ENCODE measurements at regions of chr1 and their contacts with region 1.

Region 1: DNA sequence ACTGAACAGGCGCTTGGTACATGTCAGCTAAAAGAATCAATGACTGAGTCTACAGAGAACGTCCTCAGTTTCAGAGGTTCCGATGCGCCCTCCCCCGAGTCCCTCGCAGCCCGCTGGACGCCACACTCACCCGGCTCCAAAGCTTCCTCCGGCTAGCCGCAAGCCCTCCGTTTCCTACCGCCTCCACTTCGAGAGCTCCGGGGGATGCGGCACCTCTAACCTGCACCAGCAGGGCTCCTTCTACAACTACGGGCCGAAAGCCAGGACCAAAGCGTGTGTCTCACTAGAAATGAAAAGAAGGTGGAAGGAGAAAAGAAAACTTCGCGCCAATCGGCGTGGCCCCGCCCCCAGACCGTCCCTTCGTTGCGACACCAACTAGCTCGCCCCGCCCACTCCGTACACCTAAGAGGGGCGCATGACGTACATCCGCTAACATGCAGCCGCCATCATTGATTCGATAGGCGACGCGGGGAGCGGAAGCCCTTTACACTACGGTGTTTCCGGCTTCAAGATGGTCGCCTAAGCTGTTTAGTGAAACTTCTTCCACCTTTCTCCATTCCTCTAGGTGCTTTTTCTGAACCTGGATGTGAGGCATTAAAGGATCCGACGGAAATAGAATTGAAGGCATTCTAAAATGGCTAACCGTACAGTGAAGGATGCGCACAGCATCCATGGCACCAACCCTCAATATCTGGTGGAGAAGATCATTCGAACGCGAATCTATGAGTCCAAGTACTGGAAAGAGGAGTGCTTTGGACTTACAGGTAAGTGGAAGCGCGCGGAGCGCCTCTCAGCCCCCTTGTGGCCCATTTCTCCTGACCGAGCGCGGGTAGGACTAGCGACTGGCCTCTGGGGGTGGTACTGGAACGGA is at the starts of genes ORC1 and PRPF38A:
- DNase-seq: peak; percentile 100
- ATAC-seq: peak; percentile 96
- H3K4me3 Mint-ChIP-seq: peak within 1 kb of the TSS; percentile 98
- H3K27ac Mint-ChIP-seq: peak within 1 kb of the TSS; percentile 100
- H3K4me1 Mint-ChIP-seq: peaks cover 45% of the 10 kb centered on the region
- H3K27me3 Mint-ChIP-seq: no peaks in the 10 kb centered on the region
- CTCF ChIP-seq: peak; percentile 43
- total RNA-seq, gene ORC1: 51.0 to 51.8 TPM
- total RNA-seq, gene PRPF38A: 81.3 to 85.8 TPM

Region 2: DNA sequence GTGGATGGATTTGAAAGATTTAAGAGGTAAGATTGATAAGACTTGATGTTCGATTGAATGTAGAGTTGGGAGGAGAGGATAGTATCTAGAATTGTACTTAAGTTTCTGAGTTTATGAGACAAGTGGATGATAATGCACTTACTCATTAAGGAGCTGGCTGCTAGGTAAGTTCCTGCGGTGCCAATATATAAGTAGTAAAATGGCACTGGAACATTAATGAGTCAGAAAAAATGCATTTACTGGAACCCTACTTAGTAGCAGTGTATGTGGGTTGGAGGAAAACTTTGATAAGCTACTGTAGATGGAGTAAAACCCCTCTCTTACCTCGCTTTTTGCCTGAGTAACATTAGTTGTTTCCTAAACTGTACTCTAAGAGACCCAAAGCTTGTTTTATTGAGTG is 194.3 kb before region 1 on chr1:
- CTCF ChIA-PET with region 1: no interaction called
- POLR2A ChIA-PET with region 1: no interaction called
- intact Hi-C with region 1: no loop called
- DNase-seq: no peak
- ATAC-seq: no peak
- H3K4me3 Mint-ChIP-seq: no peak overlapping the region
- H3K27ac Mint-ChIP-seq: no peak overlapping the region
- H3K4me1 Mint-ChIP-seq: peaks cover 9% of the 10 kb centered on the region
- H3K27me3 Mint-ChIP-seq: no peaks in the 10 kb centered on the region
- CTCF ChIP-seq: no peak

Region 3: GRCh38 chr1:52393174-52393573 is 11.2 kb before region 1 on chr1:
- CTCF ChIA-PET with region 1: interaction called, 3 read pairs
- POLR2A ChIA-PET with region 1: interaction called, 17 read pairs
- intact Hi-C with region 1: no loop called
- DNase-seq: no peak
- ATAC-seq: no peak
- H3K4me3 Mint-ChIP-seq: no peak overlapping the region
- H3K27ac Mint-ChIP-seq: no peak overlapping the region
- H3K4me1 Mint-ChIP-seq: no peaks in the 10 kb centered on the region
- H3K27me3 Mint-ChIP-seq: no peaks in the 10 kb centered on the region
- CTCF ChIP-seq: no peak

Region 4: DNA sequence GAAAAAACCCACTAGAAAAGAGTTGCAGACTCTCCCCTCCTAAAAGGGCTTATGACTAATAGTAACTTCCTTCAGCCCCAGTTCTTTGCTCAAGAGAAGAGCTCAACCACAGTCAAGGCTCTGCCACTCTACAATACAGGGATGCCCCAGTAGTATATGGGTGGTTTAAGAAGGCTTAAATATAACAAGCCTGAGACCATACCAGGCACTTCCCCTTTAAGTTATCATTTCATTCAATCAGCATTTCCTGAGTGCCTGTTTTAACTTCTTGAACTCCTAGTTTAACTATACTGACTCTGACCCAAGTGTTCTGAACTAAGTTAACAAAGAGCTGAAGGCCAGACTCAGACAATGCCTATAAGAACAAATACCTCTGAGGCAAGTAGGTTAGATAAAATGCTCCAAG is 19.9 kb after region 1 on chr1:
- CTCF ChIA-PET with region 1: interaction called, 3 read pairs
- POLR2A ChIA-PET with region 1: interaction called, 21 read pairs
- intact Hi-C with region 1: no loop called
- DNase-seq: peak; percentile 39
- ATAC-seq: peak; percentile 91
- H3K4me3 Mint-ChIP-seq: peak overlapping the region; percentile 54
- H3K27ac Mint-ChIP-seq: peak overlapping the region; percentile 95
- H3K4me1 Mint-ChIP-seq: peaks cover 41% of the 10 kb centered on the region
- H3K27me3 Mint-ChIP-seq: no peaks in the 10 kb centered on the region
- CTCF ChIP-seq: no peak

Region 5: GRCh38 chr1:52552505-52553361 is 148.4 kb after region 1 on chr1 and contains the start of gene TUT4:
- CTCF ChIA-PET with region 1: no interaction called
- POLR2A ChIA-PET with region 1: interaction called, 20 read pairs
- intact Hi-C with region 1: no loop called
- DNase-seq: peak; percentile 84
- ATAC-seq: peak; percentile 67
- H3K4me3 Mint-ChIP-seq: no peak within 1 kb of the TSS
- H3K27ac Mint-ChIP-seq: peak within 1 kb of the TSS; percentile 65
- H3K4me1 Mint-ChIP-seq: peaks cover 38% of the 10 kb centered on the region
- H3K27me3 Mint-ChIP-seq: no peaks in the 10 kb centered on the region
- CTCF ChIP-seq: no peak
- total RNA-seq, gene TUT4: 51.6 to 59.0 TPM

Region 6: GRCh38 chr1:52636721-52637695 is 232.7 kb after region 1 on chr1:
- CTCF ChIA-PET with region 1: no interaction called
- POLR2A ChIA-PET with region 1: interaction called, 13 read pairs
- intact Hi-C with region 1: no loop called
- DNase-seq: peak; percentile 89
- ATAC-seq: peak; percentile 59
- H3K4me3 Mint-ChIP-seq: peak overlapping the region; percentile 64
- H3K27ac Mint-ChIP-seq: peak overlapping the region; percentile 98
- H3K4me1 Mint-ChIP-seq: peaks cover 70% of the 10 kb centered on the region
- H3K27me3 Mint-ChIP-seq: no peaks in the 10 kb centered on the region
- CTCF ChIP-seq: no peak

Region 7: DNA sequence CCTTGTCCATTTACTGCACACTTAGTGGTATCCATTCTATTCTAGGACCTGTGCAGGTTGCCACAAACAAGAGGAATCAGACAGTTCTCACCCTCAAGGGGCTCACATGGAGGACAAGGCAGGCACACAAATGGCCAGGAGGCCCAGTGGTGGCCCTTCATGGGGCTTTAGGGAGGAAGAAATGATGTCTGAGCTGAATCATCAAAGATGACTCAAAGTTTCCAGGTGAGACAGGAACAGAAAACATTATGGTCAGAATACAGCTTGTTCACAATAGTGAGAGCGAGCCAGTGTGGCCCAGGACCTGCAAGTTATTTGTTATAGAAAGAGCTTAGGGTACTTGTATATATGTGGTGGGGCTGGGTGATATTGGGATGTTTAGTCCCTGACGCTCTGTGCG is 255.0 kb after region 1 on chr1:
- CTCF ChIA-PET with region 1: no interaction called
- POLR2A ChIA-PET with region 1: interaction called, 3 read pairs
- intact Hi-C with region 1: loop called (anchors 10 kb)
- DNase-seq: peak; percentile 71
- ATAC-seq: peak; percentile 79
- H3K4me3 Mint-ChIP-seq: peak overlapping the region; percentile 3
- H3K27ac Mint-ChIP-seq: peak overlapping the region; percentile 91
- H3K4me1 Mint-ChIP-seq: peaks cover 36% of the 10 kb centered on the region
- H3K27me3 Mint-ChIP-seq: no peaks in the 10 kb centered on the region
- CTCF ChIP-seq: no peak

Region 8: DNA sequence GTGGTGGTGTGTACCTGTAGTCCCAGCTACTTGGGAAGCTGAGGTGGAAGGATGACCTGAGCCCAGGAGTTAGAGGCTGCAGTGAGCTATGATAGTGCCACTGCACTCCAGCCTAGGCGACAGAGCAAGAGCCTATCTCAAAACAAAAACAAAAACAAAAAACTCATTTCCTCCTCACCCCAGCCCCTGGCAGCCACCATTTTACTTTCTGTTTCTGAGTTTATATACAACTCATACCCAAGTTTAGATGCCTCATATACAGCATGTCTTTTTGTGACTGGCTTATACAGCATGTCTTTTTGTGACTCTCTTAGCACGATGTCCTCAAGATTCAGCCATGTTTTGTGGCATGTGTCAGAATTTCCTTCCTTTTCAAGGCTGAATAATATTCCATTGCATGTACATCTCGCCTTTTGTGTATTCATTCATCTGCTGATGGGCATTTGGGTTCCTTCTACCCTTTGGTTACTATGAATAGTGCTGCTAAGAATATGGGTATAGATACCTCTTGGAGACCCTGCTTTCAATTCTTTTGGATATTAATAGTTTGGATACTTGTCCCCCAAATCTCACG is 279.1 kb after region 1 on chr1:
- CTCF ChIA-PET with region 1: interaction called, 15 read pairs
- POLR2A ChIA-PET with region 1: interaction called, 4 read pairs
- intact Hi-C with region 1: no loop called
- DNase-seq: no peak
- ATAC-seq: no peak
- H3K4me3 Mint-ChIP-seq: no peak overlapping the region
- H3K27ac Mint-ChIP-seq: no peak overlapping the region
- H3K4me1 Mint-ChIP-seq: peaks cover 8% of the 10 kb centered on the region
- H3K27me3 Mint-ChIP-seq: no peaks in the 10 kb centered on the region
- CTCF ChIP-seq: no peak